Activated T-helper 2 cell treated with anti-CD3 and anti-CD28 coated beads, Interferon-gamma antibody, Interleukin-2, Interleukin-4, amounts not matched to agents 10 μg/mL and 5 μg/mL and 100 μg/mL, durations not matched to agents 14 hours and 24 hours and 36 hours (primary cell): ENCODE measurements at regions of chr16 and their contacts with region 1.

Region 1: GRCh38 chr16:89507834-89508590 is at the start of gene SPG7:
- DNase-seq: peak; percentile 91
- H3K4me3 Mint-ChIP-seq: peak within 1 kb of the TSS; percentile 90
- H3K27ac Mint-ChIP-seq: peak within 1 kb of the TSS; percentile 90
- H3K4me1 Mint-ChIP-seq: peaks cover 24% of the 10 kb centered on the region
- H3K27me3 Mint-ChIP-seq: no peaks in the 10 kb centered on the region
- total RNA-seq, gene SPG7: 115 and 125 TPM in 2 replicates

Region 2: GRCh38 chr16:89319883-89320781 is 187.9 kb before region 1 on chr16:
- intact Hi-C with region 1: loop called (anchors 2 kb)
- DNase-seq: no peak
- H3K4me3 Mint-ChIP-seq: no peak overlapping the region
- H3K27ac Mint-ChIP-seq: peak overlapping the region; percentile 48
- H3K4me1 Mint-ChIP-seq: peaks cover 79% of the 10 kb centered on the region
- H3K27me3 Mint-ChIP-seq: no peaks in the 10 kb centered on the region

Region 3: DNA sequence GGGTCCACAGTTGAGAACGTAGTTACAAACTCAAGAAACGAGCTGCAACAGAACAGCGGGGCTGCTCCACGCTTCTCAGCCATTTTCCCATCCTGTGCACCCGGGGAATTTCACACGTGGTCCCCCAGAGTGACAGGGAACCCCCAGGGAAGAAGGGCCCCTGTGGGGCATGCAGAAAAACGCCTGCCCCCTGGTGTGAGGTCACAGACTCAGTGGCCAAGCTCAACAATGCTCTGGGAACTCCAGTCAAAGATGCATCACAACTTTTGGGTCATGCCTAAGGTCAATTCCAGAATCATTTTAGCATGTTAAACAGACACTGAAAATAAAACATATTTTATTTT is 175.1 kb before region 1 on chr16:
- intact Hi-C with region 1: loop called (anchors 1 kb)
- DNase-seq: no peak
- H3K4me3 Mint-ChIP-seq: no peak overlapping the region
- H3K27ac Mint-ChIP-seq: peak overlapping the region; percentile 19
- H3K4me1 Mint-ChIP-seq: peaks cover 53% of the 10 kb centered on the region
- H3K27me3 Mint-ChIP-seq: no peaks in the 10 kb centered on the region

Region 4: DNA sequence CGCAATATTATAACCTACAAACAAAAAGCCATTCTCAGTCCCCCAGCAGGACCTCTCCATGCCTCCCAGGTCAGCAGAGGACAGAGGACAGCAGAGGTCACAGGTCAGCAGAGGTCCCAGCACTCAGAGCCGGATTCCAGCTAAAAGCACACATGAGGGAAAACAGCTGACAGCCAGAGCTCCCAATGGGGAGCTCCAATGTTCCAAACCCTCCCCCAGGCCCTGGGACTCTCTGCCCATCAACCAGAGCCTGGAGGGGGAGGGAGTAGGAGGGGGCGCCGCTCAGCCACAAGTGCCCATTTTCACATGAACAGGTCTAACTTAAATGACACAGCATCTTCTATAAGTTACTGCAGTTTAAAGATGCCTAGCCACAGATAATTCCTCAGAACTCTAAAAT is 95.2 kb before region 1 on chr16:
- intact Hi-C with region 1: no loop called
- DNase-seq: no peak
- H3K4me3 Mint-ChIP-seq: no peak overlapping the region
- H3K27ac Mint-ChIP-seq: peak overlapping the region; percentile 65
- H3K4me1 Mint-ChIP-seq: peaks cover 50% of the 10 kb centered on the region
- H3K27me3 Mint-ChIP-seq: no peaks in the 10 kb centered on the region

Region 5: GRCh38 chr16:89422905-89423630 is 84.9 kb before region 1 on chr16:
- intact Hi-C with region 1: loop called (anchors 5 kb)
- DNase-seq: peak; percentile 28
- H3K4me3 Mint-ChIP-seq: peak overlapping the region; percentile 10
- H3K27ac Mint-ChIP-seq: peak overlapping the region; percentile 87
- H3K4me1 Mint-ChIP-seq: peaks cover 58% of the 10 kb centered on the region
- H3K27me3 Mint-ChIP-seq: no peaks in the 10 kb centered on the region

Region 6: DNA sequence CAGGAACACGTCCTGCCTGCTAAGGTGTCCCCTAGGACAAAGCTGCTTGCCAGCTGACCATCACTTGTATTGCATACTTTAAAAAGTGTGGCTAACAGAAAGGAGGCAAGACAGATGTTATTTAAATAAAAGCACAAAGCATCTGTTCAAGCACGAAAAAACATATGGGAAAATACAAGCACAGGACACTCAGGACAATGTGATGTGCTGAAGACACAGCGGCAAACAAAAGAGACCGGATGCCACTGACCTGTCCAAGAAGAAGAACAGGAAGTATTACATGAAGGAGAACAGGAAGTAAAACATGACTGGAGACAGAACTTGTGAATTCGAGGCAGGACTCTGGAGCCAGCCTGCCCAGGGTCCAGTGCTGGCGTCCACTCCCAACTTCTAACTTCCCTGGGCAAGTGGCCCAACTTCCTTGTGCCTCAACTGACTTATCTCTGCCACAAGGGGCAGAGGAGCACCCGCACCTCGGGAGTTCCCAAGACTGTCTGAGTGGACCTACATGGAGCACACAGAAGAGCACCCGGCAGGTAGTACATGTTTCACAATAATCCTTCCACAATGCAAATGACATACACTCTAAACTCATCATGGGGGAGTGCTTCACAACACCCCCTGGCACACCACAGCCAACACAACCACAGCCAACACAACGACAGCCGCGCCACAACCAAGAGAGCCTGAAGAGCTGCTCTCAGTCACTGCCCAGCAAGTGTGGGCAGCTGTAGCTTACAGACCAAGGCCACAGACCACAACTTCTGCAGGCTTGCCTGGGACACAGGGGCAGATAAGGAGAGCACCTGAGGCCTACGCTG is 54.3 kb before region 1 on chr16:
- intact Hi-C with region 1: no loop called
- DNase-seq: no peak
- H3K4me3 Mint-ChIP-seq: no peak overlapping the region
- H3K27ac Mint-ChIP-seq: peak overlapping the region; percentile 6
- H3K4me1 Mint-ChIP-seq: peaks cover 53% of the 10 kb centered on the region
- H3K27me3 Mint-ChIP-seq: no peaks in the 10 kb centered on the region

Region 7: GRCh38 chr16:89560378-89561141 is 52.5 kb after region 1 on chr16 and contains the start of gene RPL13:
- intact Hi-C with region 1: loop called (anchors 2 kb)
- DNase-seq: peak; percentile 92
- H3K4me3 Mint-ChIP-seq: peak within 1 kb of the TSS; percentile 99
- H3K27ac Mint-ChIP-seq: peak within 1 kb of the TSS; percentile 98
- H3K4me1 Mint-ChIP-seq: peaks cover 39% of the 10 kb centered on the region
- H3K27me3 Mint-ChIP-seq: no peaks in the 10 kb centered on the region
- total RNA-seq, gene RPL13: 2,404 and 2,406 TPM in 2 replicates